Activated CD8-positive, alpha-beta memory T cell treated with anti-CD3 and anti-CD28 coated beads, Interleukin-2, amount 10 ng/mL, durations not matched to agents 7 days and 5 days (primary cell): ENCODE measurements at regions of chr12 and their contacts with region 1.

Region 1: DNA sequence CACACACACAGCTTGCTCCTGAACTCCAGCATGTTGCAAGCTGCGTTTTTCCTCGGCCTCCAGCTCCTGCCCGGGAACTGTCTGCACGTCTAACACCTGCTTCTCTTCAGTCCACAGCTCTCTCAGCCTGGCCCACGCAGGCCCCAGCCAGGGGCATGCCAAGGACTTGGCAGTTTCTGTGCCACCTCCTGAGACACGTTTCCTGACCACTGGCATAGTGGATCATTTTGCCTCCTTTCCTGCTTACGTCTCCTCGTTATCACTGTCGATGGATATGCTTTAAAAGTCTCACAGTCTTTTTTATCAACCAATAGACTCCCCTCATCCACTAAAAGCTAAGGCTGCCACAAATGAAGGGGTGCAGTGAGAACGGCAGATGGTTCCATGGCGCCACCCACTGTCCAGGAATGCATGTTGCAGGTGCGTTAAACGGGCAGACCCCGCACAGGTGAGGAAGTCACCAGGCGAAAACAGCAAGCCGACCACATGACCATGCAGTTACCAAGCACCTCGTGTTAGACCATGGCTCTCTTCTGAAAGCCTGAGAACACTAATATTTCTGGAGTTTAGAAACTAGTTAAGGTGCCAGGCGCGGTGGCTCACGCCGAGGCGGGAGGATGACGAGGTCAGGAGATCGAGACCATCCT is 14.7 kb upstream of the TEAD4 start:
- DNase-seq: peak; percentile 72
- ATAC-seq: peak; percentile 68
- H3K4me3 Mint-ChIP-seq: no peak overlapping the region
- H3K27ac Mint-ChIP-seq: no peak overlapping the region
- H3K4me1 Mint-ChIP-seq: peaks cover 3% of the 10 kb centered on the region
- H3K27me3 Mint-ChIP-seq: peaks cover 12% of the 10 kb centered on the region

Region 2: GRCh38 chr12:2853626-2854025 is 90.9 kb before region 1 on chr12:
- CTCF ChIA-PET with region 1: interaction called, 12 read pairs
- DNase-seq: peak; percentile 49
- ATAC-seq: peak; percentile 62
- H3K4me3 Mint-ChIP-seq: no peak overlapping the region
- H3K27ac Mint-ChIP-seq: no peak overlapping the region
- H3K4me1 Mint-ChIP-seq: peaks cover 2% of the 10 kb centered on the region
- H3K27me3 Mint-ChIP-seq: no peaks in the 10 kb centered on the region

Region 3: GRCh38 chr12:2884810-2885209 is 59.7 kb before region 1 on chr12:
- CTCF ChIA-PET with region 1: interaction called, 14 read pairs
- DNase-seq: no peak
- ATAC-seq: no peak
- H3K4me3 Mint-ChIP-seq: no peak overlapping the region
- H3K27ac Mint-ChIP-seq: peak overlapping the region; percentile 61
- H3K4me1 Mint-ChIP-seq: peaks cover 41% of the 10 kb centered on the region
- H3K27me3 Mint-ChIP-seq: no peaks in the 10 kb centered on the region

Region 4: DNA sequence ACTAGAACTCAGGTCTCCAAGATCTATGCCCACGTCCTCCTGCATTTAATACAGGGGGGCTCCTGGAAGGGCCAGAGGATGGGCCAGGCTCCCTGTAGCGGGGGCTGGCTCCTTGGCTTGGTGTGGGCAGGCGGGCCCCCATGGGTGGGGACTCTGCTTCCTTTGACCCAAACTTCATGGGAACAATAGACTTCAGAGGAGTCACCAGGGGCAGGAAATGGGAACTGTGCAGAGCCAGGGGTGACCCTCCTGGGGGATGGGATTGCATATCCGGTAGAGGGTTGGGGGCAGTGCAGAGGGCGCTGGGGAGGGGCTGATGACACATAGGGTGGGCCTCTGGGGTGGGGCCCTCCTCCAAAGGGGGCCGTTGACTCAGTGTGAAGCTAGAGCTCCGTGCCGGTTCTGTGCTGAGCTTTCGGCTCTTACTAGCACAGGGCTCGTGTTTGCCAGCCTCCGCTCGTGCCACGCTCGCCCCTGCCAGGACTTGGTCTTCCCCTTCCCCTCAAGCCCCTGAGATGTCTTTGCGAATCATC is 19.3 kb after region 1 on chr12:
- CTCF ChIA-PET with region 1: no interaction called
- DNase-seq: no peak
- ATAC-seq: no peak
- H3K4me3 Mint-ChIP-seq: no peak overlapping the region
- H3K27ac Mint-ChIP-seq: no peak overlapping the region
- H3K4me1 Mint-ChIP-seq: peaks cover 10% of the 10 kb centered on the region
- H3K27me3 Mint-ChIP-seq: peaks cover 35% of the 10 kb centered on the region